MCF 10A (cell line): ENCODE measurements at regions of chr1 and their contacts with region 1.

Region 1: GRCh38 chr1:206001476-206001888 is 1.7 kb downstream of the RAB7B start:
- DNase-seq: peak; percentile 99
- H3K4me3 Mint-ChIP-seq: peak overlapping the region; percentile 69
- H3K27ac Mint-ChIP-seq: peak overlapping the region; percentile 75
- H3K4me1 Mint-ChIP-seq: peaks cover 37% of the 10 kb centered on the region
- H3K27me3 Mint-ChIP-seq: no peaks in the 10 kb centered on the region
- CTCF ChIP-seq: no peak

Region 2: GRCh38 chr1:206023695-206024094 is 22.2 kb after region 1 on chr1 and contains the start of gene CTSE:
- CTCF ChIA-PET with region 1: interaction called, 57 read pairs
- POLR2A ChIA-PET with region 1: interaction called, 52 read pairs
- intact Hi-C with region 1: no loop called
- DNase-seq: no peak
- H3K4me3 Mint-ChIP-seq: no peak within 1 kb of the TSS
- H3K27ac Mint-ChIP-seq: no peak within 1 kb of the TSS
- H3K4me1 Mint-ChIP-seq: peaks cover 31% of the 10 kb centered on the region
- H3K27me3 Mint-ChIP-seq: no peaks in the 10 kb centered on the region
- CTCF ChIP-seq: no peak
- total RNA-seq, gene CTSE: 0.79 and 0.81 TPM in 2 replicates

Region 3: DNA sequence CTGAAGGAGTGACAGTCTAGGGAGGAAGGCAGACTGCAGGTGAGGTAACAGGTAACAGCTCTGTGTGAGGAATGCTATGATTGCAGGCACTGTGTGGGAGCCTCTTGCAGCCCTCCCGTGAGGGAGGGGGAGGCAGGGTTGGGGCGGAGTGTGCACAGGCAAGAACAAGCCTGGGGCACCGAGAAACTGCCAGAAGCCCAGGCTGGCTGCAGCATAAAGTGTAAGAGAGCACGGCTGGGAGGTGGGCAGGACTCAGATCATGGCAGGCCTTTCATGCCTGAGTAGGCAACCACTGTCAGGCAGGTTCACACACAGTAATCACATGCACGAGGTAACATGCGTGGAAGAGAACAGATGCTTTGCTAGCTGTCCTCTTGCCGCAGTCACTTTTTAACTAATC is 40.2 kb after region 1 on chr1:
- CTCF ChIA-PET with region 1: interaction called, 3 read pairs
- POLR2A ChIA-PET with region 1: interaction called, 10 read pairs
- intact Hi-C with region 1: no loop called
- DNase-seq: peak; percentile 51
- H3K4me3 Mint-ChIP-seq: no peak overlapping the region
- H3K27ac Mint-ChIP-seq: no peak overlapping the region
- H3K4me1 Mint-ChIP-seq: peaks cover 7% of the 10 kb centered on the region
- H3K27me3 Mint-ChIP-seq: peaks cover 26% of the 10 kb centered on the region
- CTCF ChIP-seq: no peak